Activated B cell treated with CpG ODN at 0.5 μM for 24 hours (primary cell): ENCODE measurements at regions of chr9 and their contacts with region 1.

Region 1: DNA sequence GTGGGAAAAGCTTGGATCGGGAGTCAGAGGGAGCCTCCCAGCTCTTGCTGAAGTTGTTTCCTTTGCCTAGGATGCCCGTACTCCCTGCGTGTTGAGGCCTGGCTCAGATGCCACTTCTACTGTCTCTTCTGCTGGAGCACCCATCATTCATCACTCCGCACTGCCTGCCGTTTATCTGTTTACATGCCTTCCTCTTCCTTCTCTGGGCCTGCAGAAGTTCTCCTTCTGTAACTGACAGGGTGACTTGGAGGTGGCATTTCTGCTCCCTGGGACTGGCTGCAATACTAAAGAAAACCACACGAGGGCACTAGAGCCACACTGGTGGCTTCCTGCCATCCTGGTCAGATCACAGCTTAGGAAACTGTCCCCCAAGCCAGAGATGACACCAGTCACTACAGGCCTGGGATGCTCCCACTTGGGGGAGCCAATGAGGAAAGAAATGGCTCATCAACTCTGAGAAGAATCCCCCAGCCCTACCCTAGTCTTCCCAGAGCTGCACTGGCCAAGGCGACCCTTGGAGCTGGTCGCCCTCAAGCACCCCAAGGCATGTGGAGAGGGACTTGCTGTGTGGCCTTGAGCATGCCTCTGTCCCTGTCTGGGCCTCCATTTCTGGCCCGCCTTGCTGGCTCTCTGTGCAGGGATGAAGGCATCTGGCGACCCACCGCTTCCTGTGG is 9.7 kb upstream of the SLC25A51 start:
- DNase-seq: peak; percentile 71
- ATAC-seq: peak; percentile 93
- H3K4me3 Mint-ChIP-seq: no peak overlapping the region
- H3K27ac Mint-ChIP-seq: no peak overlapping the region
- H3K4me1 Mint-ChIP-seq: peaks cover 2% of the 10 kb centered on the region
- H3K27me3 Mint-ChIP-seq: no peaks in the 10 kb centered on the region
- CTCF ChIP-seq: peak; percentile 37

Region 2: DNA sequence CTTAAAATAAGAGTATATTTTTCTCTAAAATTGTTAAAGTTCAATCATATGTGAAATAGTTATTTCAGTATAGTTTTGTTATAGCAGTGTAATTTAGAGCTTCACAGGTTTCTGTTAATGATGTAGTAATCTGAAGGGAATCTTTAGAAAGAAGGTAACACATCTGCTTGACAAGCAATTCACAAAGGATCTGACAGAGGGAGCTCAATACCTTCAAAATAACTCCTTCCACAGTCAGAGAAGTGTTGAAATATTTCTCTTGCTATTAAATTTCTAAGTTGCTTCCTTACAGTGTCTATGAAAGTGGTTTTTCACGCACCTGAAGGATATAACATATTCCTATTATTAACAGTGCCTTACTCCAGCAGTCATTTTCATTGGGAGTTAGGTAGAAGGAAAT is 54.6 kb before region 1 on chr9:
- CTCF ChIA-PET with region 1: no interaction called
- POLR2A ChIA-PET with region 1: no interaction called
- intact Hi-C with region 1: loop called (anchors 10 kb)
- DNase-seq: no peak
- ATAC-seq: no peak
- H3K4me3 Mint-ChIP-seq: no peak overlapping the region
- H3K27ac Mint-ChIP-seq: no peak overlapping the region
- H3K4me1 Mint-ChIP-seq: no peaks in the 10 kb centered on the region
- H3K27me3 Mint-ChIP-seq: no peaks in the 10 kb centered on the region
- CTCF ChIP-seq: no peak

Region 3: DNA sequence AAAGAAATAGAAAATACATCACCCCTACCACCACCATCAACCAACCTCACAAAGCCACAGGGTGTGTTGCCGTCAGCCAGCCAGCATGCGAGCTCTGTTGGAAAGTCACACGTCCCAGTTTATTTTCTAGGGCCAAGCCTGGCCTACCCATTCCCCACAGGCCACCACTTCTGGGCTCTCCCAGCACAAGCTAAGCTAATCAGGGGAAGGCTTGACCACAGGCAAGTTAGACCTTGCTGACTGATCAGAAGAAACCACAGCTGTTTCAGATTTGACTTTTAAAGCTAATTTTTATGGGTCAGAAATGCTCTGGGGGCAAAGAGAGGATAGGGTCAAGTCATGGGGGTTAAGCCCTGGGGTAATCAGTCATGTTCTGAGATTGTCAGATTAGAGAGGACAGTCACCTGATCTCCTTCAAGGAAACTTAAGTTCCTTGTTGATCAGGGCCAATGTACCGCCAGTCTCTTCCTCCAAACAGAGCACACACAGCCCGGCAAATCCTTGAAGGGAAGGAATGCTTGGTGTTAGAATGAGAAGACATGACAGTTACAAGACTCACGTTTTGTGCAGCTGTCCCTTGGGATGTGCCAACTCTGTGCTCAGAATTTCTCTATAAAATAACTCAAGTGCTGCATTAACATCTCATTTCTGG is 147.8 kb after region 1 on chr9:
- CTCF ChIA-PET with region 1: no interaction called
- POLR2A ChIA-PET with region 1: no interaction called
- intact Hi-C with region 1: no loop called
- DNase-seq: no peak
- ATAC-seq: no peak
- H3K4me3 Mint-ChIP-seq: no peak overlapping the region
- H3K27ac Mint-ChIP-seq: no peak overlapping the region
- H3K4me1 Mint-ChIP-seq: peaks cover 13% of the 10 kb centered on the region
- H3K27me3 Mint-ChIP-seq: peaks cover 32% of the 10 kb centered on the region
- CTCF ChIP-seq: no peak

Region 4: GRCh38 chr9:38088006-38088925 is 174.6 kb after region 1 on chr9:
- CTCF ChIA-PET with region 1: interaction called, 16 read pairs
- POLR2A ChIA-PET with region 1: interaction called, 6 read pairs
- intact Hi-C with region 1: loop called (anchors 1 kb)
- DNase-seq: peak; percentile 64
- ATAC-seq: peak; percentile 73
- H3K4me3 Mint-ChIP-seq: no peak overlapping the region
- H3K27ac Mint-ChIP-seq: no peak overlapping the region
- H3K4me1 Mint-ChIP-seq: no peaks in the 10 kb centered on the region
- H3K27me3 Mint-ChIP-seq: peaks cover 15% of the 10 kb centered on the region
- CTCF ChIP-seq: peak; percentile 74

Region 5: DNA sequence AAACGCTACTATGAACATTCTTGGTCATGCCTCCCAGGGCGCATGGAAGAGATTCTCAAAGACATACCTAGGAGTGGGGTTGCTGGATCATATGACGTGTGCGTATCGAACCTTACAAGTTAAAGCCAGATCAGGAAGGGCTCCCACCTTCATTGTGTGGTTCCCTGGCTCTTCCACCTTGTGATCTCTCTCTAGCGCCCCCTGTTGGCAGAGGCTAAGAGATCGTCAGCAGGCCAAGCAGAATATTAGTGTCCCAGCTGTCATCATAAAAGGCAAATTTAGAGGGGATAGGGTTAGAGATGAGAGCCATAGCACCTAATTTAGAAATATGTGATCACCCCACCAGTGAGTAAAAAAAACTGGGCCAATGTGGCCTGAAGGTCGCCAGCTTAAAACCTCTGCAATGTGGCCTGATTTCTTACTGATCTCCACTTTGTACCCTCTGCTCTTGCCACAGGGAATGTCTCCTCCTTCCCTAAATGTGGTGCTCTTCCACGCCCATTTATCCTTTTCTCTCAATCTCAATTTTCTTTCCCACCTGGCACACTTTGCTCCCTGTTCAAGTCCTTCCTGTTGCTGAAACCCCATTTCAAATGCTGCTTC is 247.1 kb after region 1 on chr9:
- CTCF ChIA-PET with region 1: interaction called, 40 read pairs
- POLR2A ChIA-PET with region 1: no interaction called
- intact Hi-C with region 1: loop called (anchors 1 kb)
- DNase-seq: peak; percentile 25
- ATAC-seq: no peak
- H3K4me3 Mint-ChIP-seq: no peak overlapping the region
- H3K27ac Mint-ChIP-seq: no peak overlapping the region
- H3K4me1 Mint-ChIP-seq: no peaks in the 10 kb centered on the region
- H3K27me3 Mint-ChIP-seq: peaks cover 10% of the 10 kb centered on the region
- CTCF ChIP-seq: peak; percentile 42

Region 6: DNA sequence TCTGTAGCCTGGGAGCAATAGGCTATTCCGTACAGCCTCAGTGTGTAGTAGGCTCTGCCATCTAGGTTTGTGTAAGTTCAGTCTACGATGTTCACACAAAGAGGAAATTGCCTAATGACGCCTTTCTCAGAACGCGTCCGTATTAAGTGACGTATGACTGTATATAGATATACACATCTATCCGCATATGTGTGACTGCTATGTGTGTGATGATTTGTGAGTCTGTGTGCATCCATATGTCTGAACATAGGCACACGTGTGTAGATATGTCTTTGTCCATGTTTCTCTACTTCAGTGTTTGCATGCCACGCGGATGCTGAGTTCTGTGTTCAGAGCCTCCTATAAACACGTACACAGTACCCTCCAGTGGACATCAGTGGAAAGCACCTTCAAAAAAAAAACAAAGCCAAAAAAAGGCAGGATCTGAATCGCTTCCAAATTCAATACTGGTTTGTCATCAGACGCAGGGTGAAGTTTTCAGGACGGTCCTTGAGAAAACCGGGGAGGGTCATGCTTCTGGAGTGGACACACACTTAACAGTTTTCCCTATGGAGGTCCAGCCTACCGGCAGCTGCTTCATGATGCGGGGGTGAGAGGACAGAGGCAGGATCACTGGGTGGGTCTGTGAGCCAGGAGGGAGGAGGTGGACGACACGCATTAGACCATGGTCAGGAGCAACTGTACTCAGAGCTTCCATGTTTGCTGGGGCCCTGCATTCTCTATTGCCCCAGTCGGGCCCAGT is 449.4 kb after region 1 on chr9:
- CTCF ChIA-PET with region 1: no interaction called
- POLR2A ChIA-PET with region 1: no interaction called
- intact Hi-C with region 1: loop called (anchors 1 kb)
- DNase-seq: no peak
- ATAC-seq: peak; percentile 50
- H3K4me3 Mint-ChIP-seq: peak overlapping the region; percentile 61
- H3K27ac Mint-ChIP-seq: no peak overlapping the region
- H3K4me1 Mint-ChIP-seq: peaks cover 6% of the 10 kb centered on the region
- H3K27me3 Mint-ChIP-seq: peaks cover 9% of the 10 kb centered on the region
- CTCF ChIP-seq: no peak

Region 7: DNA sequence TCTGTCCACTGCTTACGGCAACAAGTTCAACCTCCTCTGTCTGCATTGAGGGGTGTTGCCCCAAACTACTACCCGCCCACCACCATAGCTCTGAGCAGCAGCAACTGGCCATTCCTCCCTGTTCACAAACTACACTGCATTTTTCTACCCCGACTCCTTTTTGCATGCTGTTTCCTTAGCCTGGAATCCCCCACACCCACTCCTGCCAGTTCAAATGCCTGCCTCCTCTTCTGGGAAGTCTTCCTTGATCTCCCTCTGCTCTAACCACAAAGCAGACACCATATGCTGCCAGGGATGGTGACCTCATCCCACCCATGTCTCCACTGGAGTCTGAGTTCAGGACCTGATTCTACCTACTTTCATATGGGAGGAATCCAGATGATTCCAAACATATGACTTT is 492.2 kb after region 1 on chr9:
- CTCF ChIA-PET with region 1: no interaction called
- POLR2A ChIA-PET with region 1: no interaction called
- intact Hi-C with region 1: loop called (anchors 1 kb)
- DNase-seq: no peak
- ATAC-seq: no peak
- H3K4me3 Mint-ChIP-seq: no peak overlapping the region
- H3K27ac Mint-ChIP-seq: no peak overlapping the region
- H3K4me1 Mint-ChIP-seq: no peaks in the 10 kb centered on the region
- H3K27me3 Mint-ChIP-seq: peaks cover 19% of the 10 kb centered on the region
- CTCF ChIP-seq: no peak

Region 8: GRCh38 chr9:38432922-38433510 is 519.4 kb after region 1 on chr9:
- CTCF ChIA-PET with region 1: interaction called, 39 read pairs
- POLR2A ChIA-PET with region 1: no interaction called
- intact Hi-C with region 1: loop called (anchors 1 kb)
- DNase-seq: no peak
- ATAC-seq: no peak
- H3K4me3 Mint-ChIP-seq: no peak overlapping the region
- H3K27ac Mint-ChIP-seq: no peak overlapping the region
- H3K4me1 Mint-ChIP-seq: peaks cover 2% of the 10 kb centered on the region
- H3K27me3 Mint-ChIP-seq: peaks cover 15% of the 10 kb centered on the region
- CTCF ChIP-seq: peak; percentile 30